CD4-positive, alpha-beta T cell (primary cell): ENCODE measurements at regions of chrX and their contacts with region 1.

Region 1: GRCh38 chrX:140817942-140818341 is 108.4 kb downstream of the LINC00632 start:
- DNase-seq: peak in 1 of 14 experiments; percentile 0
- ATAC-seq: no peak
- H3K4me3 ChIP-seq: no peak overlapping the region
- H3K4me3 Mint-ChIP-seq: no peak overlapping the region
- H3K27ac ChIP-seq: no peak overlapping the region
- H3K27ac Mint-ChIP-seq: no peak overlapping the region
- H3K4me1 ChIP-seq: no peaks in the 10 kb centered on the region
- H3K4me1 Mint-ChIP-seq: no peaks in the 10 kb centered on the region
- H3K27me3 ChIP-seq: no peaks in the 10 kb centered on the region
- H3K27me3 Mint-ChIP-seq: no peaks in the 10 kb centered on the region
- CTCF ChIP-seq: no peak

Region 2: GRCh38 chrX:140298960-140299825 is 518.7 kb before region 1 on chrX:
- CTCF ChIA-PET with region 1: no interaction called
- POLR2A ChIA-PET with region 1: no interaction called
- intact Hi-C with region 1: no loop called
- DNase-seq: no peak
- ATAC-seq: no peak
- H3K4me3 ChIP-seq: no peak overlapping the region
- H3K4me3 Mint-ChIP-seq: no peak overlapping the region
- H3K27ac ChIP-seq: no peak overlapping the region
- H3K27ac Mint-ChIP-seq: no peak overlapping the region
- H3K4me1 ChIP-seq: no peaks in the 10 kb centered on the region
- H3K4me1 Mint-ChIP-seq: no peaks in the 10 kb centered on the region
- H3K27me3 ChIP-seq: no peaks in the 10 kb centered on the region
- H3K27me3 Mint-ChIP-seq: no peaks in the 10 kb centered on the region
- CTCF ChIP-seq: no peak

Region 3: GRCh38 chrX:141714680-141715079 is 896.7 kb after region 1 on chrX:
- CTCF ChIA-PET with region 1: no interaction called
- POLR2A ChIA-PET with region 1: no interaction called
- intact Hi-C with region 1: loop called in 1 of 2 experiments (anchors 10 kb)
- DNase-seq: no peak
- ATAC-seq: no peak
- H3K4me3 ChIP-seq: no peak overlapping the region
- H3K4me3 Mint-ChIP-seq: no peak overlapping the region
- H3K27ac ChIP-seq: no peak overlapping the region
- H3K27ac Mint-ChIP-seq: no peak overlapping the region
- H3K4me1 ChIP-seq: no peaks in the 10 kb centered on the region
- H3K4me1 Mint-ChIP-seq: no peaks in the 10 kb centered on the region
- H3K27me3 ChIP-seq: no peaks in the 10 kb centered on the region
- H3K27me3 Mint-ChIP-seq: no peaks in the 10 kb centered on the region
- CTCF ChIP-seq: no peak